CD8-positive, alpha-beta T cell (primary cell): ENCODE measurements at regions of chr12 and their contacts with region 1.

Region 1: DNA sequence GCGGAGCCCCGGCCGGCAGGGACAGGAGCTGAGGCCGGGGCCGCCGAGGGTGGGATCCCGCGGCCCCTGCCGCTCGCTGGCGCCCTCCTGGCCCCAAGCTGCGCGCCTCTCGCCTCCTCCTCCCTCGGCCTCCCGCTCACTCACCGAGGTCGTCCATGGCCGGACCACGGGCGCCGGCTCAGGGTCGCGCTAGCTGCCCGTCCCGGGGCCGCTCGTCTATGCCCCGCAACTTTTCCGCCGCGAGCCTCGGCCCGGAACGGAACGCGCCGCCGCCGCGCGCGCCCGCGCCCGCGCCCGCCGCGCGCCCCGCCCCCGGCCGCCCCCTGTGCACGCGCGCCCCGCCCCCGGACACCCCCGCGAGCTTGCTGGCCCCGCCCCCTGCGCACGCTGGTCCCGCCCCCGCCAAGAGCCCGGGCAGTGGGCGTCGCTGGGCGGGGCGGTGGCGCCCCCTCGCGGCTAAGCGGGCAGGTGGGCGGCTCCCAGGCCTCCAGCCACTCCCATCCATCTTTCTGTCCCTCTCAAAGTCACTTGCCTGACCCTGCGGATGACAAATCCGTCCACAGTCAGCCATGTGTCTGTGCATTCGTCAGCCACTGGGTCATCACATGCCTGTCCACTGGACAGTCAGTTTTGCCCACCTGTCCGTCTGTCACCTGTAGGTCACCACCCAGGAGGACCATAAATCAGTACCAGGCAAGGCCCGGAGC is at the start of gene PXN:
- DNase-seq: peak; percentile 80 to 97 (median 93)
- ATAC-seq: peak; percentile 90
- H3K4me3 ChIP-seq: peak within 1 kb of the TSS; percentile 77 to 94
- H3K4me3 Mint-ChIP-seq: peak within 1 kb of the TSS; percentile 97
- H3K27ac ChIP-seq: peak within 1 kb of the TSS; percentile 69 to 71
- H3K27ac Mint-ChIP-seq: peak within 1 kb of the TSS; percentile 95
- H3K4me1 ChIP-seq: peaks cover 40% of the 10 kb centered on the region
- H3K4me1 Mint-ChIP-seq: peaks cover 45% of the 10 kb centered on the region
- H3K27me3 ChIP-seq: no peaks in the 10 kb centered on the region
- H3K27me3 Mint-ChIP-seq: no peaks in the 10 kb centered on the region
- CTCF ChIP-seq: peak; percentile 73
- total RNA-seq, gene PXN: 170 to 171 TPM

Region 2: GRCh38 chr12:120194534-120195395 is 70.9 kb before region 1 on chr12 and contains the start of gene GCN1:
- CTCF ChIA-PET with region 1: interaction called, 20 read pairs
- POLR2A ChIA-PET with region 1: interaction called, 48 read pairs
- intact Hi-C with region 1: no loop called
- DNase-seq: peak; percentile 76 to 94 (median 88)
- ATAC-seq: peak; percentile 86
- H3K4me3 ChIP-seq: peak within 1 kb of the TSS; percentile 67 to 72
- H3K4me3 Mint-ChIP-seq: peak within 1 kb of the TSS; percentile 82
- H3K27ac ChIP-seq: peak within 1 kb of the TSS; percentile 73 to 88
- H3K27ac Mint-ChIP-seq: peak within 1 kb of the TSS; percentile 95
- H3K4me1 ChIP-seq: peaks cover 36% of the 10 kb centered on the region
- H3K4me1 Mint-ChIP-seq: peaks cover 44% of the 10 kb centered on the region
- H3K27me3 ChIP-seq: no peaks in the 10 kb centered on the region
- H3K27me3 Mint-ChIP-seq: no peaks in the 10 kb centered on the region
- CTCF ChIP-seq: no peak
- total RNA-seq, gene GCN1: 161 to 163 TPM

Region 3: DNA sequence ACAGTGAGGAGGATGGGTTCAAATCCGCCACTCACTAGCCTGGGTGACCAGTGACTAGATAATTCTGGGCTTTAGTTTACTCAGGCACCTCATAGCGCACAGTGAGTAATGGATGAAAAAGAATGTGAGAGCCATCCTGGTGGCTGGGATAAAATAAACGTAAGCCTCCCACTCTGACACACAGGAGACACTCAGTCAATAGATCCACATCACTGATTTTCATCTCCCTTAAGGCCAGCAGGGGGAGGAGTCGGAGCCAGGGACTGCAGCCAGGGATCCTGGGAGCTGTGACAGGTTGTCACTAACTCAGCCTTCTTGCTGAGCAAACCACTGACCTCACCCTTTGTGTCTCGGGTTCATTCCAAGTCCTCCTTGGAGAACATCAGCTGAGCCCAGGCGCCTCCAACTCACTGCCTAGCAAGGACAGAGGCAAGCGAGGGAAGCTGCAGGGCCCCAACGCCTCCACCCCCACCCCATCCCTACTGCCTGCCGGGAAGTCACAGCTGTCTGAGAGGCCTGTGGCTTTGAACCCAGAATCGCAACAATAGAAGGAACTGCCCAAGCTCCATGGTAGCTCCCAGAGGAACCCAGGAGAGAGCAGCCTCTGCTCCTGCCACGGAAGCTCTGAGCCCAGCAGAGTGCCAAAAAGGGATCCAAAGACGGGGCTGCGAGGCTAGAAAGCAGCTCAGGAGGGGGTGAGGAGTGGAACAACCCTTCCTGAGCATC is 30.8 kb before region 1 on chr12:
- CTCF ChIA-PET with region 1: interaction called, 458 read pairs
- POLR2A ChIA-PET with region 1: interaction called, 150 read pairs
- intact Hi-C with region 1: no loop called
- DNase-seq: no peak
- ATAC-seq: no peak
- H3K4me3 ChIP-seq: no peak overlapping the region
- H3K4me3 Mint-ChIP-seq: no peak overlapping the region
- H3K27ac ChIP-seq: peak overlapping the region in 1 of 2 experiments; percentile 41
- H3K27ac Mint-ChIP-seq: peak overlapping the region; percentile 45
- H3K4me1 ChIP-seq: peaks cover 81% of the 10 kb centered on the region
- H3K4me1 Mint-ChIP-seq: peaks cover 80% of the 10 kb centered on the region
- H3K27me3 ChIP-seq: no peaks in the 10 kb centered on the region
- H3K27me3 Mint-ChIP-seq: no peaks in the 10 kb centered on the region
- CTCF ChIP-seq: no peak

Region 4: DNA sequence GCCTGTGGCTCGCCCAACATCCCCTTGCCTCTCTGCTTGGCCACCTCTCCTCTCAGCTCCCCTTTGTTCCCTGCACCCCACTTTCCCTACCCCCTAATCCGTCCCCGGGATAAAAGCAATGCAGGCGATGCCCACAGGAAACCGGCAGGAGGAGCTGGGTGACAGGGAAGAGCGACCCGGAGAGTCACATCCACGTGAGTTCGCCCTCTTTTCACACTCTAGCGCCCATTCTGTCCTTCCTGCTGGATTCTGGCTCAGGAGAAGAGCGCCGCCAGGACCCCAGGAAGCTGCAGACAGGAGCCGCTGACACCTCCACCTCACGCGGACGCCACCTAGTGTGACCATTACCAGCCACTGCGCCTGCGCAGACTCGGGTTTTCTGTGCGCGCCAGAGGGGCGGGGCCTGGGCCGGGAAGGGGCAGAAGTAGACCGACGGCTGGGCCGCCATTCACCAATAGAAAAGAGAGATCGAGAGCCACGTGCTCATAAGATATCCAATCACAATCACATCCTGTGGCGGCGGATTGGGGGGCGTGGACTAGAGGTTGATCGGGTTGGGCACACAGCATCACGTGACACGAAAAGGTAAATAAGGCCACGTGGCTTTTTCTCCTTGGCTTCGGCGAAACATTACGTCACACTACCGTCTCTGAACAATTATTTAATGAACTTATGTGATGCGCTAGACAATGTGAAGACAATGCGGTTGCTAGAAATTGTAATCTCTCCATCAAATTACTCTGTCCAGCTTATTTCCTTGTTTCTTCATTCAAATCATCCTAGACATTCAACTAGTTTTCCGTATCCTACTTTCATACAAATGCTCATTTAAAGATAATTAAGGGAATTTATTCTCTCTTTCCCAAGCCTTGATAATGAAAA is 51.8 kb after region 1 on chr12:
- CTCF ChIA-PET with region 1: no interaction called
- POLR2A ChIA-PET with region 1: no interaction called
- intact Hi-C with region 1: no loop called
- DNase-seq: peak; percentile 99 to 100 (median 100)
- ATAC-seq: peak; percentile 98
- H3K4me3 ChIP-seq: peak overlapping the region; percentile 61 to 65
- H3K4me3 Mint-ChIP-seq: peak overlapping the region; percentile 88
- H3K27ac ChIP-seq: peak overlapping the region; percentile 75 to 86
- H3K27ac Mint-ChIP-seq: peak overlapping the region; percentile 97
- H3K4me1 ChIP-seq: peaks cover 5% of the 10 kb centered on the region
- H3K4me1 Mint-ChIP-seq: peaks cover 13% of the 10 kb centered on the region
- H3K27me3 ChIP-seq: no peaks in the 10 kb centered on the region
- H3K27me3 Mint-ChIP-seq: no peaks in the 10 kb centered on the region
- CTCF ChIP-seq: peak; percentile 58